Activated CD4-positive, alpha-beta memory T cell treated with anti-CD3 and anti-CD28 coated beads for 36 hours (primary cell): ENCODE measurements at regions of chr10 and their contacts with region 1.

Region 1: DNA sequence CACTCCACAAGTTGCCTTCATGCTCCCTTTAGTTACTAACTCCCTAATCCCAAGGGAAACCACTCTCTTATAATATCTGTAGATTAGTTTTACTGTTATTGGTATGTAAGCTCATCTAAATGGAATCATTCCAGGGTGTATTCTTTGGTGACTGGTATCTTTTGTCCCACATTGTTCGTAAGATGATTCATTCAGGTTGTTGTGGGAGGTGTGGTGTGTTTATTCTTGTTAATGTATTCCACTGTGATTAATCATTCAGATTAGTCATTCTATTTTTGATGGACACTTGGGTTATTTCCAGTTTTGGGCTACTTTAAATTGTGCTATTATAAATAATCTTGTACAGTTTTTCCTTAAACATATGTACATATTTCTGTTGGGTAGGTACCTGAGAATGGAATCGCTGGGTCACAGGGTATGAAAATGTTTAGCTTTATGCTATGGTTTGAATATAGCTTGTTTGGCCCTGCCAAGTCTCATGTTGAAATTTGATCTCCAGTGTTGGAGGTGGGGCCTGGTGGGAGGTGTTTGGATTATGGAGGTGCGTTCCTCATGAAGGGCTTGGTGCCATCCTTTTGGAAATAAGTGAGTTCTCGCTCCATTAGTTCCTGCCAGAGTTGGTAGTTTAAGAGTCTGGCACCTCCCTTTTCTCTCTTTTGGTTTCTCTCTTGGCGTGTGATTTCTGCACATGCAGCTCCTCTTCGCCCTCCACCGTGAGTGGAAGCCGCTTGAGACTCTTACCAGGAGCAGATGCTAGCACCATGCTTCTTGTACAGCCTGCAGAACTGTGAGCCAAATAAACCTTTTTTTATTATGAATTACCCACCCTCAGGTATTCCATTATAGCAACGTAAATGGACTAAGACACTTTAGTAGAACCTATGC is 13.8 kb downstream of the BTRC start:
- DNase-seq: peak; percentile 20
- H3K4me3 Mint-ChIP-seq: no peak overlapping the region
- H3K27ac Mint-ChIP-seq: peak overlapping the region; percentile 50
- H3K4me1 Mint-ChIP-seq: peaks cover 18% of the 10 kb centered on the region
- H3K27me3 Mint-ChIP-seq: no peaks in the 10 kb centered on the region

Region 2: DNA sequence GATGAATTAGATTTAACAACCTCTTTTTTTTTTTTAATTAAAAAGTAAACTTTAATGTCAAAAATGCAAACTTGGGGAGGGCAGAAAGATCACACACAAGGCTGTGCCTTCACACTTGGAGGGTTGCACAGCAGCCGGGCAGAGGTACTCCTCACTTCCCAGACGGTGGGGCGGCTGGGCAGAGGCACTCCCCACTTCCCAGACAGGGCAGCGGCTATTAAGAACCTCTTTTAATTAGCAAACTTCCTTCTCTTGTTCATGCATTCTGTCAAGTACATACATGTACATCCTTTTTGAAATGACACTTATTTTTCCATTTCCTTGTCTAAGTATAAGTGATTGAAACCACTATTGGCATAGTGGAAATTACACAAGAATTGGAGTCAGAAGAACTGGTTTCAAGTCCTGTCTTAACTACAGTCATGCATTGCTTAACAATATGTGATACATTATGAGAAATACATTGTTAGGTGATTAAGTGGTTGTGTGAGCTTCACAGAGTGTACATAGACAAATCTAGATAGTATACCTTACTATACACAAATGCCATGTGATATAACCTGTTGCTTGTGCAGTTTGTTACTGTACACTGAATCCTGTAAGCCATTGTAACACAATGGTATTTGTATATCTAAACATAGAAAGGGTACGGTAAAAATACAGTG is 12.7 kb after region 1 on chr10:
- CTCF ChIA-PET with region 1: interaction called, 4 read pairs
- POLR2A ChIA-PET with region 1: interaction called, 3 read pairs
- intact Hi-C with region 1: loop called (anchors 1 kb)
- DNase-seq: no peak
- H3K4me3 Mint-ChIP-seq: no peak overlapping the region
- H3K27ac Mint-ChIP-seq: no peak overlapping the region
- H3K4me1 Mint-ChIP-seq: peaks cover 27% of the 10 kb centered on the region
- H3K27me3 Mint-ChIP-seq: no peaks in the 10 kb centered on the region

Region 3: GRCh38 chr10:101453791-101454718 is 86.2 kb after region 1 on chr10:
- CTCF ChIA-PET with region 1: no interaction called
- POLR2A ChIA-PET with region 1: no interaction called
- intact Hi-C with region 1: no loop called
- DNase-seq: no peak
- H3K4me3 Mint-ChIP-seq: no peak overlapping the region
- H3K27ac Mint-ChIP-seq: no peak overlapping the region
- H3K4me1 Mint-ChIP-seq: peaks cover 27% of the 10 kb centered on the region
- H3K27me3 Mint-ChIP-seq: no peaks in the 10 kb centered on the region